HEK293 (cell line): ENCODE measurements at regions of chr2 and their contacts with region 1.

Region 1: DNA sequence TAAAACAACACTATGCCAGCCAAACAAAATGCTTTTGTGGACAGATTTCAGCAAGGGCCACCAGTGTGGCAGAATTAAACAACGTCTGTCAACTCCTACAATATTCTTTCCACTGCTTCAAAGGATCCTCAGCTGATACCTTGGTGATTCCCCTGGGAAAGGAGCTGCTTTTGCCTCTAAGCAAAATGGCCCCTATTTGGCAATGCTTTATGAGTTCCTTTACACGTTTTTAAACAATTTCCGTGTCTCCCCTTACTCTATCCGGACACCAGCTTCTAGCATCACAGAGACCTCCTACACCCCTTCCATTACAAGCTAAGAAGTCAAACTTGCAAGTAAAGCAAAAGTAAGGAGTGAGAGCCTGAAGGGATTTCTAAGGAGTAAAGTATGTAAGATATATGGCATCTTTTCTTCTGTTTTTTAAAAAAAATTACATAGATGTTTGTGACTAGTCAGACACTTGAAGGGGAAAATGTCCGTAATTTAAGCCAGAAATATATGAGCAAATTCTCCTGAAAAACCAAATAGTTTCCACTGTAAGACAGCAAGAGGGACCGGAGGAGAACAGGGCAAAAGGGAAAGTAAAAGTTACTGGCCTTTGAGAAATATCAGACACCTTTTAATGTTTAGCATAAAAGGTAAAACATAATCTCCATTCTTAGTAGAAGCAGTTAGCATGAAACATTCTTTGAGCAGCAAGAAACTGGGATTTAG is 1.9 kb downstream of the SOS1 start:
- H3K4me3 ChIP-seq: peak overlapping the region; percentile 83
- H3K27ac ChIP-seq: no peak overlapping the region
- H3K4me1 ChIP-seq: peaks cover 8% of the 10 kb centered on the region
- CTCF ChIP-seq: no peak

Region 2: DNA sequence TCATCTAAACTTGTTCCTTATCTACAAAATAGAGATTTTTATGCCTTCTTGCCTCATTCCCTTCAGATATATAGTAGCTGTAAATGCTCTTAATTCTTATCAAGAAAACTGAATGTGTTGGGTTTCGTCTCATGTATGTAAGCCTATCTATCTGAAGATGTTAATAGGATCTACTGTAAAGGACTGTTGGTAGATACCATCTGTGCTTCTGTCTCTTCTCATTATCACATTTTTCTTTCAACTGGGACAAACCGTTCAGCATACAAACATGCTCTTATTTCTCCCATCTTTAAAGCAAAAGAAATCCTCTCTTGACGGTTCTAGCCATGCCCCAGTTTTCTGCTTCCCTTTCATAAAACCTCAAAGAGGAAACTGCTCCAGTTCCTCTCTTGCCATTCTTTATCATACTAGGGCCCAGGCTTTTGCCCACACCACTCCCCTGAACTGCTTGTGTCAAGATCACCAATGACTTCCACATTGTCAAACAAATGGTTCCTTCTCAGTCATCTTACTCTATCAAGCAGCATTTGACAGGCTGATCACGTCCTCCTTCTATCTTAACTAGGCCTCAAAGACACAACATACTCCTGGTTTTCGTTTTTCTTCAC is 140.5 kb before region 1 on chr2:
- CTCF ChIA-PET with region 1: no interaction called
- POLR2A ChIA-PET with region 1: no interaction called
- H3K4me3 ChIP-seq: no peak overlapping the region
- H3K27ac ChIP-seq: no peak overlapping the region
- H3K4me1 ChIP-seq: no peaks in the 10 kb centered on the region
- CTCF ChIP-seq: no peak

Region 3: DNA sequence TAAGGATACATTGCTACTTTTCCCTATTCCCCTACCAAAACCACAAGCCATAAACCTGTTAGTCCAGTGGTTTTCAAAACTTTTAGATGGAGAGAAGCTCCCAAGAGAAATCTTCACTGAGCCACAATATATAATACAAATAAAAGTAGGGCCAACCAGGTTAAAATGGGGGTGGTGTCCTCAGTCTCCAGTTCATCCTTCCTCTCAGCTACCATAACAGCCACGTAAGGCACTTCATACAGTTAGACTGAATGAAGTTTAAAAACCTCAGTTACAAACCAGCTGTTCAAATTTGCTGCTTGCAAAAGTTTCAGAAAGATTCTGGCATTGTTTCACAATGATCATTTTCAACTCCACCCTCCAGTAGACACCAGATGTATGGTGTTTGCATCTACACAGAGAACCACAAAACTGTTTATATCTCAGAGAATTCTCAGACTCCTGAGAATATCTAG is 24.1 kb before region 1 on chr2:
- CTCF ChIA-PET with region 1: interaction called, 13 read pairs
- POLR2A ChIA-PET with region 1: no interaction called
- H3K4me3 ChIP-seq: no peak overlapping the region
- H3K27ac ChIP-seq: no peak overlapping the region; the same call in 1 of the 2 replicates
- H3K4me1 ChIP-seq: peaks cover 8% of the 10 kb centered on the region; the same call in 1 of the 2 replicates
- CTCF ChIP-seq: no peak